ENCODE measurements at regions of chr11 and their contacts with region 1.

Region 1: GRCh38 chr11:6251120-6251733 is 8.4 kb upstream of the CCKBR start:
- DNase-seq: peak; percentile 74
- H3K4me3 Mint-ChIP-seq: no peak overlapping the region
- H3K27ac Mint-ChIP-seq: no peak overlapping the region
- H3K4me1 Mint-ChIP-seq: no peaks in the 10 kb centered on the region
- H3K27me3 Mint-ChIP-seq: no peaks in the 10 kb centered on the region

Region 2: GRCh38 chr11:6022956-6023355 is 228.3 kb before region 1 on chr11:
- CTCF ChIA-PET with region 1: interaction called, 10 read pairs
- POLR2A ChIA-PET with region 1: no interaction called
- intact Hi-C with region 1: no loop called
- DNase-seq: no peak
- H3K4me3 Mint-ChIP-seq: no peak overlapping the region
- H3K27ac Mint-ChIP-seq: no peak overlapping the region
- H3K4me1 Mint-ChIP-seq: no peaks in the 10 kb centered on the region
- H3K27me3 Mint-ChIP-seq: peaks cover 26% of the 10 kb centered on the region

Region 3: DNA sequence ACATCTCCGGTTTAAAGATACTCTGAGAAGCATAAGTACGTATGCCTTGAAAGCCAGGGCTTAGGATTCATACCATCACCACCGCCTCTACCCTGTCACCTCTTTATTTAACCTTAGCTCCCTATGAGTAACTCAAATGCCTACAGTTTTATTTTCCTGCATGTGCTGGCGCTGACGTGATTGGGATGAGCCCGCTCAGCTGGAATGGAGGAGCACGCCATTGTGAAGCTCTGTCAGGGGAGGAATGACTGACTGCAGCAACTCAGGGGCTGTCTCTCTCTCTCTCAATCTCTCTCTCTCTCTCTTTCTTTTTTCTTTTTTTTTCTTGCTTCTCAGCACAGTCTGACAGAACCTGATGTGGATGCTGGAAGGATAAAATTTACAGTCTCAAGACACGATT is 56.6 kb after region 1 on chr11:
- CTCF ChIA-PET with region 1: interaction called, 10 read pairs
- POLR2A ChIA-PET with region 1: no interaction called
- intact Hi-C with region 1: no loop called
- DNase-seq: no peak
- H3K4me3 Mint-ChIP-seq: no peak overlapping the region
- H3K27ac Mint-ChIP-seq: no peak overlapping the region
- H3K4me1 Mint-ChIP-seq: no peaks in the 10 kb centered on the region
- H3K27me3 Mint-ChIP-seq: peaks cover 12% of the 10 kb centered on the region

Region 4: DNA sequence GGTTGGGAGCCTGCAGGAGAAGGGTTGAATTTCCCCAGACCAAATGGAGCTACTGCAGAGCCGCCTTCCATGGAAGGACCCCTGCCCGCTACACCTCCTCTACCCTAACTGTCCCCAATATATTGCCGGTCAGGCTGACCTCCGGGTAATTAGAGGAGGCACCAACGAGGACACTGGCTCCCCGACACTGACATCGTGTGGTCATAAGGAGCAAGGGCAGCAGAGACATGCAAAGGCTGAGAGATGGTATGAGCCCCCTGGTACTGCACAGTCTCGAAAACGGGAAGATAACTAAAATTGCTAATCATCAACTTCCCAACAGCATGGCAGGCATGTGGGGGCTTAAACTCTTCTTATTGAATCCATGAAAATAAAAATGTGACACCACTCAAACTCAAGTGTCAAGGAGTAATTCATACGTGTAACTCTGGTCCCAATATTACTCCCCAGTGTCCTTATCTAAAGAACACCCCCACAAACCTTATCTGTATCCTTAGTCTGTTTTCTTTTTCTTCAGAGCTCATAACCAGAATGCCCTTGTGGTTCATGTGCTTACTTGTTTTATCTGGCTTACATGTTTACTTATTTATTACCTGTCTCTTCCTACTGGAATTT is 64.7 kb after region 1 on chr11:
- CTCF ChIA-PET with region 1: interaction called, 65 read pairs
- POLR2A ChIA-PET with region 1: no interaction called
- intact Hi-C with region 1: loop called (anchors 1 kb)
- DNase-seq: peak; percentile 53
- H3K4me3 Mint-ChIP-seq: no peak overlapping the region
- H3K27ac Mint-ChIP-seq: no peak overlapping the region
- H3K4me1 Mint-ChIP-seq: peaks cover 16% of the 10 kb centered on the region
- H3K27me3 Mint-ChIP-seq: peaks cover 32% of the 10 kb centered on the region

Region 5: GRCh38 chr11:6377902-6378639 is 126.8 kb after region 1 on chr11:
- CTCF ChIA-PET with region 1: no interaction called
- POLR2A ChIA-PET with region 1: no interaction called
- intact Hi-C with region 1: no loop called
- DNase-seq: no peak
- H3K4me3 Mint-ChIP-seq: no peak overlapping the region
- H3K27ac Mint-ChIP-seq: peak overlapping the region; percentile 25
- H3K4me1 Mint-ChIP-seq: peaks cover 23% of the 10 kb centered on the region
- H3K27me3 Mint-ChIP-seq: no peaks in the 10 kb centered on the region